ENCODE measurements at regions of chr15 and their contacts with region 1.

Region 1: GRCh38 chr15:55060836-55061235 is 135.9 kb downstream of the RSL24D1 start:
- DNase-seq: no peak
- ATAC-seq: no peak
- H3K4me3 ChIP-seq: no peak overlapping the region
- H3K27ac ChIP-seq: no peak overlapping the region
- H3K4me1 ChIP-seq: no peaks in the 10 kb centered on the region
- H3K27me3 ChIP-seq: no peaks in the 10 kb centered on the region
- CTCF ChIP-seq: no peak
- POLR2A ChIP-seq: no peak

Region 2: DNA sequence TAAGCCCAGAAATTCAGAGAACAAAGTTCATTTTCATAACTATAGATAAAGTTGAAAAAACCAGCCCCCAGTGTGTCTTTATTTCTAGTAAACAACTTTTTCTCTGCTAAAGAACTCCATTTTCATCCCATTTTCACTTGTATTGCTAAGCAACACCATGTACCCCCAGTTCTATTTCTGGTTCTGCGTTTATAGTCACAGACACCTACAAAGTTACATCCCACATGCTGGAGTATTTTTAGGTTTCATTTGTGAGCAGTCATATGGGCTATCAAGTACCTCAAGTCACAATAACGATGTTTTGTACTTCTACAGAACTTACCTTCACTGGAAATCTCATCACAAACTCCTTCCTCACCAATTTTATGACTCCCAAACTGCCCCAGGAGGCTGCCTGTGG is 100.6 kb before region 1 on chr15:
- in situ Hi-C with region 1: loop called in 1 of 4 experiments (anchors 25 kb)
- intact Hi-C with region 1: no loop called
- DNase-seq: no peak
- ATAC-seq: no peak
- H3K4me3 ChIP-seq: no peak overlapping the region
- H3K27ac ChIP-seq: no peak overlapping the region
- H3K4me1 ChIP-seq: peaks cover 0 to 4% of the 10 kb centered on the region in 2 donors
- H3K27me3 ChIP-seq: no peaks in the 10 kb centered on the region
- CTCF ChIP-seq: no peak
- POLR2A ChIP-seq: no peak

Measured in gastrocnemius medialis (tissue), 4 donors.